ENCODE measurements at regions of chr1 and their contacts with region 1.

Region 1: DNA sequence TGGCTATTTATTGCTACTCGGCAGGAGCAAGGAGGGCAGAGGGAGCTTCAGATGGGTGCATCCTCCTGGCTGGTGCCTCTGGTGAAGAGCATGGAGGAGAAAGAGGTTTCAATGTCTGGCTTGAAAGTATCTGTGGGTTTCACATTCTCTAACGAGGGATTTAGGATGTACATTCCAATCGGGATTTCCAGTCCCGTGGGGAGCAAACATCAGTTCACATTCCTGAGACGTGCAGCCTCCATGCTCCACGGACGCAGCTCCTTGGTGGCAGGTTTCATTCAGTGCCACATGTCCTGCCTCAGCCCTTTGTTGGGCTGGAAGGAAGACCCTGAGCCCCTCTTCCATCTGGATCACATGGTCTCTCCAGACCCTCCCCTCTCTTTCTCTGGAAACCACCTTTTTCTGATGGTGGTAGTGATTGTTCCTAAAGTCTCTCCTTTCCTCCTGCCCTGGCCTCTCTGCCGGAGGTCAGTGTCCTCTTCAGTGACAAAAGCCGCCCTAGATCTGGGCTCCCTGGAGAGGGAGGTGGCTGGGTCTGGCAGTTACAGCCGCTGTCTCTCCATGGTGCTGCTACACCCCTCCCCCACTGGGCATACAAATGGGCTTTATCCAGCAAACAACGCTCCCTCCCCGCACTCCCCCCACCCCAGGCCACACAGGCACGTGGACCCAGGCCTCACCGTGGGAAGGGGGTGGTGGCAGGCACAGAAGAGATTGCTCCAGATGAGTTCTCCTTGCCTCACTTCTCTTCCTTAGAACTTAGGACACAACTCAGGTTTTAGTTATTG is 826 bp upstream of the CA14 start:
- DNase-seq: no peak
- H3K4me3 ChIP-seq: no peak overlapping the region
- H3K27ac ChIP-seq: no peak overlapping the region
- H3K4me1 ChIP-seq: peaks cover 18 to 34% of the 10 kb centered on the region in 2 donors
- H3K27me3 ChIP-seq: no peaks in the 10 kb centered on the region
- CTCF ChIP-seq: no peak
- POLR2A ChIP-seq: no peak

Region 2: DNA sequence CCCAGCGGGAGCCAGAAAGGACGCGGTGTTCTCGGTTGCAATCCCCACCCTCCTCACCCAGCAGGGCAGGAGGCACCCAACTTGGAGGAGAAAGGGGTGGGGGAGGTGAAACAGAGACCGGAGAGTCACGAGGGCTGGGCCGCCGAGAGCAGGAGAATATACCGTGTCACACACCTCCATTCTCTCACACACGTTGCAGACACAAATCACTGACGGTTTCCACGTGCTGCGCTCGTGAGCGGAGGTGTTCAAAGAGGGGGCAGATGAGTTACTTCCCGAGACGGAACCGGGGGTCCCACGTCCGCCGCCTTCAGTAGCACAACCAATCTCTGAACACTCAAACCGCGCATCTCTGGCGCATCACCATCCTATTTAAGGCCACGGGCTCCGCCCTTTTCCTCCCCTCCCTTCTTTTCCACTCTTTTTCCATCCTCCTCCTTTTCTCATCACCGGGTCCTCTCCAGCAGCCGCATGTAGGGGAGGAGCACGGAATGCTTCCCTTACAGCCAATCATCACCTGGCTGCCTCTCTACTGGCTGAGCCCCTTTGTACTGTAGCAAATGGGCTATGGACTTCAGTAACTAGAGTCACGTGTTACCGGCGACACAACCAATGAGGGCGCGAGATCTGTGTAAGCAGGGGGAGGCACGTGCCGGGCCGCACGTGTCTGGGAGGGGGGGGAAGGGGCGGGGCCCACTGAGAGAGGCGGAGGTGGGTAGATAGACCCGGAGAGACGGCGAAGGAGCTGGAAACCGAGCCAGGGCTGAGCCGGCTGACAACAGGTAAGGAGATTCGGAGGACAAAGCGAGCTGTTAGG is 25.3 kb after region 1 on chr1 and contains the start of gene CIART:
- intact Hi-C with region 1: loop called (anchors 2 kb)
- DNase-seq: peak; percentile 97 to 98
- H3K4me3 ChIP-seq: peak within 1 kb of the TSS in 2 of 3 donors; percentile 39 to 40
- H3K27ac ChIP-seq: peak within 1 kb of the TSS; percentile 78 to 94 (median 91)
- H3K4me1 ChIP-seq: peaks cover 10 to 17% of the 10 kb centered on the region in 2 donors
- H3K27me3 ChIP-seq: no peaks in the 10 kb centered on the region
- CTCF ChIP-seq: no peak
- POLR2A ChIP-seq: peak in 1 of 2 donors; percentile 66
- total RNA-seq, gene CIART: 2.9 to 7.9 (median 5.4) TPM

Region 3: DNA sequence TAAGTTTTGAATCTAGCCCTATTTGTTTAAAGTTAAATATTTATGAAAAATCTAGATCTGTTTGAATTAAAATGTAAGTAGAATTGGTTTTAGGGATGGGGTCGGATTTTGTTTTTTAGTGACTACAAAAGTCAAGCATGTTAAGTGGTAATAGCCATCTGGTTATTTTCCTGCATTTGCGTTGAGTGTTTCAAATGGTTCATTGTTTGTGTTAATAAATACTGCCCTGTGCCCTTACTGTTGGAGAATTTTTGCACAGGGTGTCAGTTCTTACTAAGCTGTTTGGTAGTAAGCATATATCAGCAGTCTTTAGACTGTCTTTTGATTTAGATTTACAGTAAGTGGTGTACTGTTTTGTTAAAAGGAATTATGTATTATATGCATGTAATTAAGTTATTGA is 184.4 kb after region 1 on chr1:
- intact Hi-C with region 1: no loop called
- DNase-seq: no peak
- H3K4me3 ChIP-seq: no peak overlapping the region
- H3K27ac ChIP-seq: no peak overlapping the region
- H3K4me1 ChIP-seq: no peaks in the 10 kb centered on the region
- H3K27me3 ChIP-seq: no peaks in the 10 kb centered on the region
- CTCF ChIP-seq: no peak
- POLR2A ChIP-seq: no peak